ENCODE measurements at regions of chr7 and their contacts with region 1.

Region 1: GRCh38 chr7:44847508-44847920 is 373 bp downstream of the H2AZ2 start:
- DNase-seq: peak; percentile 90
- H3K4me3 ChIP-seq: peak overlapping the region; percentile 88
- H3K27ac ChIP-seq: peak overlapping the region; percentile 86
- H3K4me1 ChIP-seq: peaks cover 33% of the 10 kb centered on the region
- CTCF ChIP-seq: peak; percentile 85

Region 2: GRCh38 chr7:44348300-44348699 is 499.2 kb before region 1 on chr7:
- CTCF ChIA-PET with region 1: no interaction called
- POLR2A ChIA-PET with region 1: no interaction called
- intact Hi-C with region 1: no loop called
- DNase-seq: peak; percentile 73
- H3K4me3 ChIP-seq: no peak overlapping the region
- H3K27ac ChIP-seq: no peak overlapping the region
- H3K4me1 ChIP-seq: no peaks in the 10 kb centered on the region
- CTCF ChIP-seq: peak; percentile 80

Region 3: GRCh38 chr7:44606450-44607254 is 240.9 kb before region 1 on chr7 and contains the start of gene OGDH:
- CTCF ChIA-PET with region 1: interaction called, 3 read pairs
- POLR2A ChIA-PET with region 1: no interaction called
- intact Hi-C with region 1: loop called (anchors 1 kb)
- DNase-seq: peak; percentile 99
- H3K4me3 ChIP-seq: peak within 1 kb of the TSS; percentile 77
- H3K27ac ChIP-seq: peak within 1 kb of the TSS; percentile 71
- H3K4me1 ChIP-seq: peaks cover 33% of the 10 kb centered on the region
- CTCF ChIP-seq: no peak
- total RNA-seq, gene OGDH: 32.6 and 47.6 TPM in 2 replicates

Region 4: GRCh38 chr7:44796431-44797328 is 50.8 kb before region 1 on chr7 and contains the start of gene PPIA:
- CTCF ChIA-PET with region 1: no interaction called
- POLR2A ChIA-PET with region 1: interaction called, 8 read pairs
- intact Hi-C with region 1: loop called (anchors 1 kb)
- DNase-seq: peak; percentile 100
- H3K4me3 ChIP-seq: peak within 1 kb of the TSS; percentile 99
- H3K27ac ChIP-seq: peak within 1 kb of the TSS; percentile 82
- H3K4me1 ChIP-seq: peaks cover 24% of the 10 kb centered on the region
- CTCF ChIP-seq: no peak
- total RNA-seq, gene PPIA: 2,827 and 2,935 TPM in 2 replicates

Region 5: GRCh38 chr7:44891372-44891771 is 43.9 kb after region 1 on chr7:
- CTCF ChIA-PET with region 1: no interaction called
- POLR2A ChIA-PET with region 1: interaction called, 14 read pairs
- intact Hi-C with region 1: no loop called
- DNase-seq: peak; percentile 79
- H3K4me3 ChIP-seq: no peak overlapping the region
- H3K27ac ChIP-seq: peak overlapping the region; percentile 57
- H3K4me1 ChIP-seq: peaks cover 35% of the 10 kb centered on the region
- CTCF ChIP-seq: no peak

Region 6: DNA sequence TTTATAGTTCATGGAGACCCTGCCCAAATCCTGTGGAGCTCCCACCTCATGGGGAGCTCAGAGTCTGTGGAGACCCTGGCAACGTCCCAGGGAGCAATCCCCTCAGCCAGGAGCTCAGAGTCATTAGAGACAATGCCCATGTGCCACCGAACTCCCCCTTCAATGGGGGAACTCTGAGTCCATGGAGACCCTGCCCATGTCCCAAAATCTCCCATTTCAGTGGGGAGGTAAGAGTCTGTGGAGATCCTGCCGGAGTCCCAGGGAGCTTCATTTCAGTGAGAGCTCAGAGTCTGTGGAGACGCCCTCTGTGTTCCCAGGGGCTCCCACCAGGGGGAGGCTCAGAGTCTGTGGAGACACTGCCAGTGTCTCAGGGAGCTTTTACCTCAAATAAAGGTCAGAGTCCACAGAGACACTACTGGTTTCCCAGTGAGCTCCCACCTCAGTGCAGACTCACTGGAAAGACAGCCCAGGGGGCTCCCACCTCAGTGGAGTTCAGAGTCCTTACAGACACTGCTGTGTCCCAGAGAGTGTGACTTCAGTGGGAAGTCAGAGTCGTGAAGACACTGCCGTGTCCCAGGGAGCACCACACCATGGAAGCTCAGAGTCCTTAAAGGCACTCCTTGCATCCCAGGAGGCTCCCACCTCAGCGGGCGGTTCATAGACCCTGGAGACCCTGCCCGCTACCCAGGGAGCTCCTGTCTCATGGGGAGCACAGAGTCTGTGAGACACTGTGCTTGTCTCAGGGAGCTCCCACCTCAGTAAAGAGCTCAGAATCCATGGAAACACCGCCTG is 126.3 kb after region 1 on chr7:
- CTCF ChIA-PET with region 1: no interaction called
- POLR2A ChIA-PET with region 1: interaction called, 3 read pairs
- intact Hi-C with region 1: loop called (anchors 2 kb)
- DNase-seq: peak; percentile 55
- H3K4me3 ChIP-seq: no peak overlapping the region
- H3K27ac ChIP-seq: no peak overlapping the region
- H3K4me1 ChIP-seq: peaks cover 32% of the 10 kb centered on the region
- CTCF ChIP-seq: peak; percentile 79

Region 7: DNA sequence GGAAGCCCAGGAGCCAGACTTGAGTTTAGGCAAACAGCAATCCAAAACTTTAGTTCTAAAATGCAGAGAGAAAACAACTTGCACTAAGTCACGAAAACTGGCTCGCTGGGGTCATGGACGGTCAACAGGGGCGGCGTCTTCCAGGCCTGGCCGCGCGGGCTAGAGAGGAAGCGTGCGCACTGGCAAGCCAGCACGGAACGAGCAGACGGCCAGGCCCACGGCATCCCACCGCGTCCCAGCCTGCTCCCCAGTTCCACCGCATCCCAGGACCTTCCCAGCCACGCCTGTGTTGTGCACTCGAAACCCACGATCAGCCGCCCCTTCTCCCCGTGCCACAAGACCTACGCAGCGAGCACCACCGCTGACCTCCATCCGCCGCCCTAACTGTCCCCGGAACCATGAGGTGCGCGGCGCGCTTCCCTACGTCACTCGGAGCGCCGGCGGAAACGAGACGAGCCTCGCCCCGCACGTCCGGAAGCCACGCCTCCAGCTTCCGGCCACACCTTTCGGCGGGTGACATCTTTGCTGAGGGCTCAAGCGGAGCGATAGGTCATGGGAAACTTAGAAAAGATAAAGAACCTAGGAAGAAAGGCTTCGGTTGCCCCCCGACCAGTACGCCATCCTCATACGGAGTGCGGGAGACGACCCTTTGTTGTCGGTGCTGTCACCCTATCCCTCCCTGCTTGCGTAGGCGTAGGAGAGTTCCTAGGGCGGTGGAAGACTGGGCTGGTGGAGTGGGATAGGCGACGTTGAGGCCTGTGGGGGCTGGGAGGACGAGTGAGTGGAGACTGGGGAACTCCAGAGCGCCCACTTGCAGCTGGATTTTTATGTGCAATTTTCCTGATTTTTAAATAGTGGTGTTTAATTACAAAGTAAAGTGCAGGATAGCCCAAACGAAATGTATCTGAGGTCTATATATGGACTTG is 264.0 kb after region 1 on chr7 and contains the start of gene TBRG4:
- CTCF ChIA-PET with region 1: no interaction called
- POLR2A ChIA-PET with region 1: no interaction called
- intact Hi-C with region 1: loop called (anchors 10 kb)
- DNase-seq: peak; percentile 97
- H3K4me3 ChIP-seq: peak within 1 kb of the TSS; percentile 85
- H3K27ac ChIP-seq: peak within 1 kb of the TSS; percentile 80
- H3K4me1 ChIP-seq: peaks cover 46% of the 10 kb centered on the region
- CTCF ChIP-seq: peak; percentile 77
- total RNA-seq, gene TBRG4: 113 and 117 TPM in 2 replicates